PC-9 (cell line): ENCODE measurements at regions of chr6 and their contacts with region 1.

Region 1: DNA sequence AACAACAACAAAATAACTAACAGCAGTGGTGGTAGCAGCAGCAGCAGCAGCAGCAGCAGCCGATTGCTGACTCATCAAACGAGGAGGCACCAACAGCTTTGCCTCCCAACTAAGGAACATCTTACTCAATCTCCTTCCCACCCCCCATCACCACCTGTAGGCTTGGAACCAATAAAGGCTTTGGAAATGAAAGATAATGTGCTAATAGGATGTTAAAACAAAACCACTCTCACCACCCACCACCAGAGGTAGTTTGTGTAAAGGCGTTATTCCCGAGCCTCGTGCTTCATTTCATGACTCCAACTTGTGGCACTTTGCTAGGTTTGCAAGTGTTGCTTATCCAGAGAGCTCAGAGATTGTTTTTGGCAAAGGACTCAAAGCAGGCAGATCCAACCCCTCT is 346.5 kb downstream of the CD83 start:
- DNase-seq: no peak
- H3K4me3 ChIP-seq: no peak overlapping the region
- H3K27ac ChIP-seq: no peak overlapping the region
- H3K4me1 ChIP-seq: no peaks in the 10 kb centered on the region
- H3K27me3 ChIP-seq: no peaks in the 10 kb centered on the region
- CTCF ChIP-seq: no peak

Region 2: GRCh38 chr6:13924146-13924948 is 539.7 kb before region 1 on chr6:
- CTCF ChIA-PET with region 1: no interaction called
- POLR2A ChIA-PET with region 1: no interaction called
- intact Hi-C with region 1: no loop called
- DNase-seq: no peak
- H3K4me3 ChIP-seq: peak overlapping the region; percentile 33; the same call in 1 of the 2 replicates
- H3K27ac ChIP-seq: no peak overlapping the region
- H3K4me1 ChIP-seq: no peaks in the 10 kb centered on the region
- H3K27me3 ChIP-seq: no peaks in the 10 kb centered on the region
- CTCF ChIP-seq: no peak

Region 3: GRCh38 chr6:14059791-14060444 is 404.1 kb before region 1 on chr6:
- CTCF ChIA-PET with region 1: no interaction called
- POLR2A ChIA-PET with region 1: interaction called, 29 read pairs
- intact Hi-C with region 1: no loop called
- DNase-seq: peak; percentile 61 to 65
- H3K4me3 ChIP-seq: no peak overlapping the region
- H3K27ac ChIP-seq: no peak overlapping the region
- H3K4me1 ChIP-seq: peaks cover 25% of the 10 kb centered on the region
- H3K27me3 ChIP-seq: no peaks in the 10 kb centered on the region
- CTCF ChIP-seq: no peak

Region 4: GRCh38 chr6:14286144-14286543 is 177.9 kb before region 1 on chr6:
- CTCF ChIA-PET with region 1: no interaction called
- POLR2A ChIA-PET with region 1: no interaction called
- intact Hi-C with region 1: loop called (anchors 5 kb)
- DNase-seq: peak; percentile 41 to 54
- H3K4me3 ChIP-seq: no peak overlapping the region
- H3K27ac ChIP-seq: no peak overlapping the region
- H3K4me1 ChIP-seq: peaks cover 7% of the 10 kb centered on the region; the same call in 1 of the 2 replicates
- H3K27me3 ChIP-seq: no peaks in the 10 kb centered on the region
- CTCF ChIP-seq: no peak

Region 5: GRCh38 chr6:14524319-14524718 is 60.3 kb after region 1 on chr6:
- CTCF ChIA-PET with region 1: no interaction called
- POLR2A ChIA-PET with region 1: interaction called, 12 read pairs
- intact Hi-C with region 1: no loop called
- DNase-seq: no peak
- H3K4me3 ChIP-seq: no peak overlapping the region
- H3K27ac ChIP-seq: no peak overlapping the region
- H3K4me1 ChIP-seq: no peaks in the 10 kb centered on the region
- H3K27me3 ChIP-seq: no peaks in the 10 kb centered on the region
- CTCF ChIP-seq: no peak